Gastrocnemius medialis (tissue), 4 donors: ENCODE measurements at regions of chr1 and their contacts with region 1.

Region 1: GRCh38 chr1:89454845-89455521 is 69.6 kb upstream of the LRRC8B start:
- DNase-seq: no peak
- ATAC-seq: peak in 1 of 2 donors; percentile 30
- H3K4me3 ChIP-seq: no peak overlapping the region
- H3K27ac ChIP-seq: no peak overlapping the region
- H3K4me1 ChIP-seq: no peaks in the 10 kb centered on the region
- H3K27me3 ChIP-seq: no peaks in the 10 kb centered on the region
- CTCF ChIP-seq: peak; percentile 33 to 61 (median 49)
- POLR2A ChIP-seq: no peak

Region 2: DNA sequence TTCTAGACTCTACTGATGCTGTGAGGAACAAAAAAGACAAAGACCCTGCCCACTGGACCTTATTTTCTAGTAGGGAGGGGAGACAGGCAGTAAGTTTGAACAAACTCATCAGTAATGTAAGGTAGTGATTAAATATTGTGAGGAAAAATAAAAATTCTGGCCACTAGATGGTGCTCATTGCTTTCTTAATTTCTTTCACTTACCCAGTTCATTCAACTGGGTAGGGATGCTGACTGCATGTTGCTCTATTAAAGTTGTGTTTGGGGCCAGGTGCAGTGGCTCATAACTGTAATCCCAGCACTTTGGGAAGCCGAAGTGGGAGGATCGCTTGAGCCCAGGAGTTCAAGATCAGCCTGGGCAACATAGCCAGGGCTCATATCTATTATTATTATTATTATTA is 456.3 kb before region 1 on chr1:
- in situ Hi-C with region 1: loop called in 3 of 4 experiments (anchors 10 kb)
- intact Hi-C with region 1: loop called (anchors 2 kb)
- DNase-seq: no peak
- ATAC-seq: peak; percentile 86 to 91
- H3K4me3 ChIP-seq: no peak overlapping the region
- H3K27ac ChIP-seq: no peak overlapping the region
- H3K4me1 ChIP-seq: no peaks in the 10 kb centered on the region
- H3K27me3 ChIP-seq: no peaks in the 10 kb centered on the region
- CTCF ChIP-seq: peak; percentile 40 to 66 (median 62)
- POLR2A ChIP-seq: no peak